CD8-positive, alpha-beta T cell (primary cell): ENCODE measurements at regions of chr6 and their contacts with region 1.

Region 1: DNA sequence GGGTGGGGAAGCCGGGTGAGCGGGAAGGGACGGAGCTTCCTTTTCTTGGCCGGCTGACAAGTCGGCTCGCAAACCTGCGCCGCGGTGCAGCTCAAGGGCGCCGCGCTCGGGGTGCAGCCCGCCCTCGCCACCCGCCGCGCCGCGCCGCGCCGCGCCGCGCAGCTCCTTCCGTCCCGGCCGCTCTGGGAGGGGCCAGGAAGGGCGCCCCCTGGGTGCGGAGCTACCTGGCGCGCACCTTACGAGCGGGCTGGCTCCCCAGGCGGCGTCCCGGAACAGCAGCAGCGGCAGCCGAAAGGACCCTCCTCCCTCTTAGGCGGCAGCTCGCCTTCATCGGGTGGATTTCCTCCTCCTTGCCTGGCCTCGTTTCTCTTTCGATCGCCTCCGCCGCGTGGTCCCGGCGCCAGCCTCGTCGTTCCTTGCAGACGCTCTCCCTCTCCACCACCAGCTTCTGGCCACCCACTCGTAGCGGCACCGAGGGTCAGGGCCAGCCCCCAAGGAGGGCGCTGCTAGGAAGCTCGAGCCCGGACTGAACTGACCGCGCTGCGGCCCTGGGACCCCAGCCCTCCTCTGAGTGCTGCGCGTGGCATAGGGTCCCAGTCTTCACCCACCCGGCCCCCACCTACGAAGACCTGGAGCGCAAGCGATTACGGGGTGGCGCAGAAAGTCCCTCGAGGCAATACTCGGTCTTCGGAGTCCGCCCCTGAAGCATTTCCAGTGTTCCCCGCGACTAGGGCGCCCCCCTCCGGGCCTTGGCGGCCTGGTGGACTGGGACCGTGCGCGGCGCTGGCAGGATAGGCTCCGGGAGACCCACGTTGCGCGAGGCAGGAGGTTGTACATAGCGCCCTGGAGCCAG is at the start of gene MAP3K5:
- DNase-seq: peak; percentile 92 to 98 (median 95)
- ATAC-seq: peak; percentile 80
- H3K4me3 ChIP-seq: peak within 1 kb of the TSS; percentile 98 to 99
- H3K4me3 Mint-ChIP-seq: peak within 1 kb of the TSS; percentile 94
- H3K27ac ChIP-seq: peak within 1 kb of the TSS; percentile 92 to 96
- H3K27ac Mint-ChIP-seq: peak within 1 kb of the TSS; percentile 96
- H3K4me1 ChIP-seq: peaks cover 36% of the 10 kb centered on the region
- H3K4me1 Mint-ChIP-seq: peaks cover 39% of the 10 kb centered on the region
- H3K27me3 ChIP-seq: no peaks in the 10 kb centered on the region
- H3K27me3 Mint-ChIP-seq: no peaks in the 10 kb centered on the region
- CTCF ChIP-seq: peak; percentile 72
- total RNA-seq, gene MAP3K5: 11.1 to 11.3 TPM

Region 2: DNA sequence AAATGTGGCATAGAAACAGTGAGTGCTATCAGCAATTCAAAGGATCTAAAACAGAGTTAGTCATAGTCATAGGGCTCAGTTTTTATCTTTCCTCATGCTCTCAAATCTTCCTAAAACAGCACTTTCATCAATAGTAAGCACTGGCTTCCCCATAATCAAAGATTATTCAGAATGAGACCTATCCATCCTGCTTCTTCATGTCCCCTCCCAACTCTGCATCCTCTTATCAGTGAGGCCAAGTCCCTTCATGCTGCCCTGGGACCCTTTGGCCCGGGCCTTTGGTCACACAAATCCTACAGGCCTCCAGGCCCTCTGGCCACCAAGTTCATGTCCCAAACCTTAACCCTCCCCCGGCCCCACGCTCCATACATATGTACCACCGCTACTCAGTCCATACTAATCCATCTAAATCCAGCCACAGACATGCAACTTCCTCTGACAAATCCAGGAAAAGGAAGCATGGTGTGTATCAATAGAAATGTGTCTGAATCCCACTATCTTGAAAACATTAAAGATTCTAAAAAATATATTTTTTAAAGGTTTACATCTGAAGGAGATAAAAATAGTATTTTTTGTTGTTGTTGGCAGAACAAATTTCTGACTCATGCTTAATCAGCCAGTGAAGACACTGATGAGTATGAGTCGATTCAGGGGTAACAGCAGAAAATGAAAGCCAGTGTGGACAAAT is 797.6 kb before region 1 on chr6:
- CTCF ChIA-PET with region 1: no interaction called
- POLR2A ChIA-PET with region 1: no interaction called
- intact Hi-C with region 1: no loop called
- DNase-seq: no peak
- ATAC-seq: no peak
- H3K4me3 ChIP-seq: no peak overlapping the region
- H3K4me3 Mint-ChIP-seq: no peak overlapping the region
- H3K27ac ChIP-seq: no peak overlapping the region
- H3K27ac Mint-ChIP-seq: no peak overlapping the region
- H3K4me1 ChIP-seq: no peaks in the 10 kb centered on the region
- H3K4me1 Mint-ChIP-seq: no peaks in the 10 kb centered on the region
- H3K27me3 ChIP-seq: no peaks in the 10 kb centered on the region
- H3K27me3 Mint-ChIP-seq: peaks cover 2% of the 10 kb centered on the region
- CTCF ChIP-seq: no peak

Region 3: GRCh38 chr6:136289579-136290409 is 502.8 kb before region 1 on chr6 and contains the start of gene BCLAF1:
- CTCF ChIA-PET with region 1: interaction called, 7 read pairs
- POLR2A ChIA-PET with region 1: interaction called, 20 read pairs
- intact Hi-C with region 1: loop called in 1 of 2 experiments (anchors 10 kb)
- DNase-seq: peak; percentile 98 to 100 (median 99)
- ATAC-seq: peak; percentile 75
- H3K4me3 ChIP-seq: peak within 1 kb of the TSS; percentile 87 to 92
- H3K4me3 Mint-ChIP-seq: peak within 1 kb of the TSS; percentile 97
- H3K27ac ChIP-seq: peak within 1 kb of the TSS; percentile 98 to 100
- H3K27ac Mint-ChIP-seq: peak within 1 kb of the TSS; percentile 100
- H3K4me1 ChIP-seq: peaks cover 44% of the 10 kb centered on the region
- H3K4me1 Mint-ChIP-seq: peaks cover 44% of the 10 kb centered on the region
- H3K27me3 ChIP-seq: no peaks in the 10 kb centered on the region
- H3K27me3 Mint-ChIP-seq: no peaks in the 10 kb centered on the region
- CTCF ChIP-seq: no peak
- total RNA-seq, gene BCLAF1: 471 to 494 TPM

Region 4: DNA sequence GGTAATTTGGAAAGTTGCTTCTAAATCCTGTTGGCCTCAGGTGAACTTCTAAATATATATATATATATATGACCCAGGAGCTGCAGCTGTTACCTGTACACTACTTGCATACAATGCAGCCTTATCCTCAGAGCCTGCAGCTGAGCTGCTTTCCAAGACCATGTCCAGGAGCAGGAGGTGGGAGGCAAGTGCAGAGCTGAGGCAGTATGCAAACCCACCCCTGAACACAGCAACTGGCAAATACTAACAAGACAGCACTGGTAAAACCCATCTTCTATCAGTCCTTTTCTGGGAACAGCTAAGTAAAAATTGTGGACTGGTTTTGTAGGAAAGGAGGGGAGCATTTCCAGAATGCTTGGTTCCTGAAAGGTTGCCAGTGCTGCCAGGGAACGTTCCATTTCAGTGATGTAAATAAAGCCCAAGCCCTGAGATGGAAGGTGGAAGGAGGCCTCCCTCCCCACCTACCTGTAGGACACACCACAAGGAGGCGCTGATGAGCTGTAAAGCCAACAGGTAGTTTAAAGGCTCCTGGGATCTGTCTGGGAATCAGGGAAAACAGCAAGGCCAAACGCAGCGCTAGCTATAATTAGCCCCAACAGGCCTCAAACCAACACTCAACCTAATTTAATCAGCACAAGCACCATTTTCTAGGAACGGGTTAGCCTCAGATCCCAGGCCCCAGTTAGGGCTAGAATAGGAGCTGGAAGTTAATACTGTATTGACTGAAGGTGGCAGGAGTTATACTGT is 148.6 kb before region 1 on chr6:
- CTCF ChIA-PET with region 1: interaction called, 269 read pairs
- POLR2A ChIA-PET with region 1: interaction called, 60 read pairs
- intact Hi-C with region 1: loop called (anchors 1 kb)
- DNase-seq: peak; percentile 52 to 86 (median 80)
- ATAC-seq: peak; percentile 54
- H3K4me3 ChIP-seq: no peak overlapping the region
- H3K4me3 Mint-ChIP-seq: no peak overlapping the region
- H3K27ac ChIP-seq: peak overlapping the region in 1 of 2 experiments; percentile 6
- H3K27ac Mint-ChIP-seq: peak overlapping the region; percentile 45
- H3K4me1 ChIP-seq: peaks cover 10% of the 10 kb centered on the region
- H3K4me1 Mint-ChIP-seq: peaks cover 3% of the 10 kb centered on the region
- H3K27me3 ChIP-seq: no peaks in the 10 kb centered on the region
- H3K27me3 Mint-ChIP-seq: no peaks in the 10 kb centered on the region
- CTCF ChIP-seq: peak; percentile 96

Region 5: GRCh38 chr6:136701045-136701444 is 91.6 kb before region 1 on chr6:
- CTCF ChIA-PET with region 1: interaction called, 18 read pairs
- POLR2A ChIA-PET with region 1: interaction called, 5 read pairs
- intact Hi-C with region 1: loop called in 1 of 2 experiments (anchors 2 kb)
- DNase-seq: no peak
- ATAC-seq: no peak
- H3K4me3 ChIP-seq: no peak overlapping the region
- H3K4me3 Mint-ChIP-seq: no peak overlapping the region
- H3K27ac ChIP-seq: no peak overlapping the region
- H3K27ac Mint-ChIP-seq: no peak overlapping the region
- H3K4me1 ChIP-seq: no peaks in the 10 kb centered on the region
- H3K4me1 Mint-ChIP-seq: peaks cover 23% of the 10 kb centered on the region
- H3K27me3 ChIP-seq: no peaks in the 10 kb centered on the region
- H3K27me3 Mint-ChIP-seq: no peaks in the 10 kb centered on the region
- CTCF ChIP-seq: no peak

Region 6: GRCh38 chr6:136737871-136738691 is 54.6 kb before region 1 on chr6:
- CTCF ChIA-PET with region 1: interaction called, 63 read pairs
- POLR2A ChIA-PET with region 1: interaction called, 29 read pairs
- intact Hi-C with region 1: loop called (anchors 1 to 2 kb)
- DNase-seq: no peak
- ATAC-seq: no peak
- H3K4me3 ChIP-seq: no peak overlapping the region
- H3K4me3 Mint-ChIP-seq: no peak overlapping the region
- H3K27ac ChIP-seq: no peak overlapping the region
- H3K27ac Mint-ChIP-seq: no peak overlapping the region
- H3K4me1 ChIP-seq: no peaks in the 10 kb centered on the region
- H3K4me1 Mint-ChIP-seq: peaks cover 24% of the 10 kb centered on the region
- H3K27me3 ChIP-seq: no peaks in the 10 kb centered on the region
- H3K27me3 Mint-ChIP-seq: no peaks in the 10 kb centered on the region
- CTCF ChIP-seq: no peak

Region 7: DNA sequence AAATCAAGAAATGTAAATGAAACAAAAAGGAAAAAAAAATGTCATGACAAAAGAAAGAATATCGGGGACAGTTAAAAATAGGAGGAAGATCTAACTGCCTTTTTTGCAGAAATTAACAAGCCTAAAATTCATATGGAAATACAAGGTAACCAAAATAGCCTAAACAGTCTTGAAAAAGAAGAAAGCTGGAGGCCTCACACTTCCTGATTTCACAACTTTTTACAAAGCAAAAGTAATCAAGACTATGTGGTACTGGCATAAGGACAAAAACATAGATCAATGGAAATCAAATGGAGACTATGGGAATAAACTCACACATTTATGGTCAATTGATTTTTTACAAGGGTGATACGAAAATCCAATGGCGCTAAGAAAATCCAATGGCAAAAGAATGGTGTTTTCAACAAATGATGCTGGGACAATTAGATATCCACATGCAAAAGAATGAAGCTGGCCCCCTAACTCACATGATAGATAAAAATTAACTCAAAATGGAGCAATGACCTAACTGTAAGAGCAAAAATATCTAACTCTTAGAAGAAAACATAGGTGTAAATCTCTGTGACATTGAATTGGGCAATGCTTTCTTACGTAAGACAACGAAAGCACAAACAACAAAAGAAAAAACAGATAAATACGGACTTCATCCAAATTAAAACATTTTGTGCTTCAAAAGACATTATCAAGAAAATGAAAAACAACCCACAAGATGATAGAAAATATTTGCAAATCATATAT is 24.9 kb before region 1 on chr6:
- CTCF ChIA-PET with region 1: interaction called, 71 read pairs
- POLR2A ChIA-PET with region 1: interaction called, 71 read pairs
- intact Hi-C with region 1: no loop called
- DNase-seq: no peak
- ATAC-seq: no peak
- H3K4me3 ChIP-seq: no peak overlapping the region
- H3K4me3 Mint-ChIP-seq: no peak overlapping the region
- H3K27ac ChIP-seq: peak overlapping the region in 1 of 2 experiments; percentile 28
- H3K27ac Mint-ChIP-seq: peak overlapping the region; percentile 28
- H3K4me1 ChIP-seq: peaks cover 33% of the 10 kb centered on the region
- H3K4me1 Mint-ChIP-seq: peaks cover 74% of the 10 kb centered on the region
- H3K27me3 ChIP-seq: no peaks in the 10 kb centered on the region
- H3K27me3 Mint-ChIP-seq: no peaks in the 10 kb centered on the region
- CTCF ChIP-seq: no peak

Region 8: DNA sequence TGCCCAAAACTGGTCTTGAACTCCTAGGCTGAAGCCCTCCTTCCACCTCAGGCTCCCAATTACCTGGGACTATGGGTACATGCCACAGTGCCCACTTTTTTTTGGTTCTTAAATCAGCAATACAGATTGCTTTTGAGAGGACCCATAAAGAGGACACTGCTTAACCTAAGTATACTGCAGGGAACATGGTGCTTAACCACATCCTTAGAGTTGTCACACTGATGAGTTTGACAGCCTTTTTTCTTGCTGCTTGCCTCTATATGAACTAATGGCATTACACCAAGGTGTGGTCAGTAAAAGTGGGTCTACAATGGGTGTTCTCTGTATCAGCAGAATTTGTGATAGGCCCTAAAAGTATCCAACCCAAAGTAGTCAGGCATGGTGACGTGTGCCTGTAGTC is 122.3 kb after region 1 on chr6:
- CTCF ChIA-PET with region 1: no interaction called
- POLR2A ChIA-PET with region 1: no interaction called
- intact Hi-C with region 1: no loop called
- DNase-seq: no peak
- ATAC-seq: no peak
- H3K4me3 ChIP-seq: no peak overlapping the region
- H3K4me3 Mint-ChIP-seq: no peak overlapping the region
- H3K27ac ChIP-seq: no peak overlapping the region
- H3K27ac Mint-ChIP-seq: no peak overlapping the region
- H3K4me1 ChIP-seq: peaks cover under 1% of the 10 kb centered on the region
- H3K4me1 Mint-ChIP-seq: peaks cover 3% of the 10 kb centered on the region
- H3K27me3 ChIP-seq: no peaks in the 10 kb centered on the region
- H3K27me3 Mint-ChIP-seq: peaks cover 11% of the 10 kb centered on the region
- CTCF ChIP-seq: no peak

Region 9: GRCh38 chr6:136967876-136968752 is 175.5 kb after region 1 on chr6:
- CTCF ChIA-PET with region 1: no interaction called
- POLR2A ChIA-PET with region 1: no interaction called
- intact Hi-C with region 1: no loop called
- DNase-seq: peak; percentile 19 to 74 (median 60)
- ATAC-seq: peak; percentile 61
- H3K4me3 ChIP-seq: no peak overlapping the region
- H3K4me3 Mint-ChIP-seq: no peak overlapping the region
- H3K27ac ChIP-seq: no peak overlapping the region
- H3K27ac Mint-ChIP-seq: no peak overlapping the region
- H3K4me1 ChIP-seq: peaks cover 4% of the 10 kb centered on the region
- H3K4me1 Mint-ChIP-seq: no peaks in the 10 kb centered on the region
- H3K27me3 ChIP-seq: no peaks in the 10 kb centered on the region
- H3K27me3 Mint-ChIP-seq: peaks cover 32% of the 10 kb centered on the region
- CTCF ChIP-seq: peak; percentile 59